ENCODE measurements at regions of chr18 and their contacts with region 1.

Region 1: DNA sequence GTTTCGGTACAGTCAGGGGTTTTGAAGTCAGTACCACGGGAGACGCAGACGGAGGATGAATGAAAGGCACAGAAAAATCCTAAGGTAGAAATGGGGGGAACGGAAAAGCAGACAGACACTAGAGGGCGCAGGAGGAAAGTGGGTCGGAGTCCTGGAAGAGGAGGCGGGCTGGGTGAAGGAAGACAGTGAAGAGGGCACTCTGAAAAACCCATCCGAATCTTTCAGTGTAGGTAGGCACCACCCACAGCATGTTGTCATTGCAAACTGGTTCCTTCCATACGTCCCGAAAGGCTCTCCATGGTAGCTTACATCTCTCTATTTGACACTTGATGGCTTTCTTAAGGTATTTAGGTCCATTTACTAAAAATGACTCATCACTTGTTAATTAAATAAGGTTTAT is 18.5 kb upstream of the ZNF236 start:
- DNase-seq: peak; percentile 81
- ATAC-seq: peak; percentile 77
- H3K4me3 Mint-ChIP-seq: no peak overlapping the region
- H3K27ac Mint-ChIP-seq: no peak overlapping the region
- H3K4me1 Mint-ChIP-seq: peaks cover 14% of the 10 kb centered on the region
- H3K27me3 Mint-ChIP-seq: peaks cover 4% of the 10 kb centered on the region

Region 2: GRCh38 chr18:76721207-76721996 is 82.4 kb before region 1 on chr18:
- CTCF ChIA-PET with region 1: interaction called, 15 read pairs
- POLR2A ChIA-PET with region 1: no interaction called
- DNase-seq: peak; percentile 94
- ATAC-seq: peak; percentile 98
- H3K4me3 Mint-ChIP-seq: peak overlapping the region; percentile 59
- H3K27ac Mint-ChIP-seq: peak overlapping the region; percentile 88
- H3K4me1 Mint-ChIP-seq: peaks cover 42% of the 10 kb centered on the region
- H3K27me3 Mint-ChIP-seq: peaks cover 31% of the 10 kb centered on the region

Region 3: GRCh38 chr18:76822510-76823160 is 18.8 kb after region 1 on chr18 and contains the start of gene ZNF236:
- CTCF ChIA-PET with region 1: interaction called, 64 read pairs
- POLR2A ChIA-PET with region 1: interaction called, 4 read pairs
- DNase-seq: peak; percentile 73
- ATAC-seq: peak; percentile 67
- H3K4me3 Mint-ChIP-seq: peak within 1 kb of the TSS; percentile 92
- H3K27ac Mint-ChIP-seq: peak within 1 kb of the TSS; percentile 91
- H3K4me1 Mint-ChIP-seq: peaks cover 49% of the 10 kb centered on the region
- H3K27me3 Mint-ChIP-seq: no peaks in the 10 kb centered on the region
- total RNA-seq, gene ZNF236: 18.2 to 24.3 TPM

Region 4: GRCh38 chr18:76859474-76860339 is 55.9 kb after region 1 on chr18:
- CTCF ChIA-PET with region 1: interaction called, 43 read pairs
- POLR2A ChIA-PET with region 1: no interaction called
- DNase-seq: peak; percentile 48
- ATAC-seq: peak; percentile 86
- H3K4me3 Mint-ChIP-seq: peak overlapping the region; percentile 6
- H3K27ac Mint-ChIP-seq: peak overlapping the region; percentile 57
- H3K4me1 Mint-ChIP-seq: peaks cover 28% of the 10 kb centered on the region
- H3K27me3 Mint-ChIP-seq: no peaks in the 10 kb centered on the region

Region 5: DNA sequence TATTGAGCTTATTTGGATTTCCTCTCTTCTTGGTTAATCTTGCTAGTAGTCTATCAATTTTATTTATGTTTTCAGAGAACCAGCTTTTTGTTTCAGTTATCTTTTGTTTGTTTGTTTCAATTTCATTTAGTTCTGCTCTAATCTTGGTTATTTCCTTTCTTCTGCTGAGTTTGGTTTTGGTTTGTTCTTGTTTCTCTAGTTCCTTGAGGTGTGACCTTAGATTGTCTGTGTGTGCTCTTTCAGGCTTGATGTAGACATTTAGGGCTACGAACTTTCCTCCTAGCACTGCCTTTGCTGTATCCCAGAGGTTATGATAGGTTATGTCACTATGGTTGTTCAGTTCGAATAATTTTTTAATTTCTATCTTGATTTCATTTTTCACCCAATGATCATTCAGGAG is 160.1 kb after region 1 on chr18:
- CTCF ChIA-PET with region 1: interaction called, 14 read pairs
- POLR2A ChIA-PET with region 1: no interaction called
- DNase-seq: no peak
- ATAC-seq: no peak
- H3K4me3 Mint-ChIP-seq: no peak overlapping the region
- H3K27ac Mint-ChIP-seq: peak overlapping the region; percentile 39
- H3K4me1 Mint-ChIP-seq: peaks cover 27% of the 10 kb centered on the region
- H3K27me3 Mint-ChIP-seq: no peaks in the 10 kb centered on the region

Region 6: DNA sequence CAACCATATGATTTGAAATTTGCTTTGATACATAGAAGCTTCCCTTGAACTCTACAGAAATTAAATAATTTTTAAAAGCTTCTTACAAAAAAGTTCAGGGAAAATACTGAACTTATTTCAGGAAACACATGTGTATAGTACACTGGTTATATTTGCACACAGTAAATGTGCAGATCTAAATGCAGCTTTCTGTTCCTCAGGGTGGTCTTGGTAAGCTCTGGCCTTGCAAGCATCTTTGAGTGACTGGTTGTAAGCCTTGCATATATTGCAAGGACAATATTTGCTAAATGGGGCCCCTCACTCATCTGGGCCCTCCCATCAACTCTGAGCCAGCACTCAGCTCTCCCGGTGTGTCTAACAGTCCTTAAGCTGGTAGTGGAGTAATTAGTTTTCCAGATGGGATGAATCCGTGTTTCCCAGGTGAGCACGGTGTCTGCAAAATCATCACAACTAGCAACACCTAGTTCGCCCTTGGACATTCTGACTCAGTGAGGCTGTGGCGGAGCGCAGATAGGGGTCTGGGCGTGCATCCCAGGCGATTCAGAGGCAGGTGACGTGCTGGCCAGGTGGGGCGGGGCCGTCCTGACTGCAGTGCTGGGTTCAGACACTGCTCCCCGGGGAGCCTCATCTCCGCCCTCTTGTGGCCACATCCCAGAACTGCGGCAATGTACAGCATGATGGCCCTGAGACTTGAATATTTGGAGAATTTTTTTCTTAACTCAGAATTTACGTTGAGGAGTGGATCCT is 179.2 kb after region 1 on chr18:
- CTCF ChIA-PET with region 1: interaction called, 61 read pairs
- POLR2A ChIA-PET with region 1: no interaction called
- DNase-seq: peak; percentile 93
- ATAC-seq: peak; percentile 97
- H3K4me3 Mint-ChIP-seq: no peak overlapping the region
- H3K27ac Mint-ChIP-seq: no peak overlapping the region
- H3K4me1 Mint-ChIP-seq: peaks cover 4% of the 10 kb centered on the region
- H3K27me3 Mint-ChIP-seq: no peaks in the 10 kb centered on the region

Measured in activated CD8-positive, alpha-beta T cell treated with anti-CD3 and anti-CD28 coated beads, Interleukin-2, amount 10 ng/mL, durations not matched to agents 7 days and 5 days (primary cell).